ENCODE measurements at regions of chr3 and their contacts with region 1.

Region 1: GRCh38 chr3:70815817-70816216 is 503.4 kb upstream of the MDFIC2 start:
- DNase-seq: no peak
- H3K4me3 ChIP-seq: no peak overlapping the region
- H3K27ac ChIP-seq: no peak overlapping the region
- H3K4me1 ChIP-seq: peaks cover 0 to 9% (median 0%) of the 10 kb centered on the region in 4 donors
- H3K27me3 ChIP-seq: no peaks in the 10 kb centered on the region
- CTCF ChIP-seq: no peak
- EP300 ChIP-seq: no peak
- POLR2A ChIP-seq: no peak

Region 2: DNA sequence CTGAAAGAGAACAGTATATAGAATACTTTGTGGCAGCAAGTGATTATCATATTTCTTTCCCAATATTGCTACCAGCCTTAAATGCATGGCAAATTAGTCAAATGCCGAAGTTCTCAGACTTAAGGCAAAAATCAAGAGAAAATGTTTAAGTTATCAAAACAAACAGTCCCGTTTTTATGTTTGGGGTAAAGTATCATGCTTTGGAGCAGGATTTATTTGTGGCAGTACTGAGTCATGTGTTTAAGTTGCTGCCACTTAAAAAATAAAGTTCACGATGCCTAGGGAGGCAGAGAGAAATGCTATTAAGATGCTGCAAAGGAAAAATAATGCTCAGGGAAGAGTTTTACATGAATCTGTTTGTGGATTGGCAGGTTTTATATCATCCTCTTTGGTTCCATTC is 86.0 kb before region 1 on chr3:
- intact Hi-C with region 1: loop called (anchors 5 kb)
- DNase-seq: no peak
- H3K4me3 ChIP-seq: no peak overlapping the region
- H3K27ac ChIP-seq: no peak overlapping the region
- H3K4me1 ChIP-seq: peaks cover 0 to 30% (median 14%) of the 10 kb centered on the region in 4 donors
- H3K27me3 ChIP-seq: no peaks in the 10 kb centered on the region
- CTCF ChIP-seq: no peak
- EP300 ChIP-seq: no peak
- POLR2A ChIP-seq: no peak

Region 3: DNA sequence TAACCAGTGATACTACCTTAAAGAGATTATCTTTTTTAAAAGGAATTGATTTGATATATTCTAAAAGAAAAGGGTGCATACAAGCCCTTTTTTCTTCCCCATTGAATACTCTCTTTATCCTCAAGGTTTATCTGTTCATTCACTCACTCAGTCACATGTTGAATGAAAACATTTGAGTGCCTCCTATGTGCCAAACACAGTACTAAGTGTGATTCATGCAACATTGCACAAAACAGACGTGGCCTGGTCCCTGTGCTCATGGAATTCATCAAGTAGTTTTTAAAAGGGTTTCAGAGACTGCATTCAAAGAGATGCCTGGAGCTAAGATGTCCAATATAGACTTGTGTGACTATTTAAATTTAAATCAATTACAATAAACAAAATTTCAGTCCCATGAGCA is 41.2 kb before region 1 on chr3:
- intact Hi-C with region 1: no loop called
- DNase-seq: no peak
- H3K4me3 ChIP-seq: no peak overlapping the region
- H3K27ac ChIP-seq: no peak overlapping the region
- H3K4me1 ChIP-seq: no peaks in the 10 kb centered on the region
- H3K27me3 ChIP-seq: no peaks in the 10 kb centered on the region
- CTCF ChIP-seq: no peak
- EP300 ChIP-seq: no peak
- POLR2A ChIP-seq: no peak

Region 4: DNA sequence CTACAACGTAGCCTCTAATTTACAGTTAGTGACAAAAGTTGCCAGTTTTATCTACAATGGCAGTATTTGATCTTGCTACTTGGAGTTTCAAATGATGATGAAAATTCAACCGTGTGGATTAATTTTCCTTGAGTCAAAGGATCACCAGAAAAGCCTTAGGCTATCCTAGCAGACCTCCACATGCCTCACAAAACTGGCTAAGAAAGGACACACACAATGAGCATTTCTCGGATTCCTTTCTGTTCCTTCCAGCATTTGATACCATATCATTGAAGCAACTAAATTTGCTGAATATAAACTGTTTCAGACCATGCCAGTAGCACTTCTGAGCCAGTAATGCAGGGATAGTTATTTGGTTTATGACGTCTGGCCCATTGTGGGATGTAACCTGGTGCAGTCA is 84.0 kb after region 1 on chr3:
- intact Hi-C with region 1: no loop called
- DNase-seq: no peak
- H3K4me3 ChIP-seq: no peak overlapping the region
- H3K27ac ChIP-seq: no peak overlapping the region
- H3K4me1 ChIP-seq: no peaks in the 10 kb centered on the region
- H3K27me3 ChIP-seq: no peaks in the 10 kb centered on the region
- CTCF ChIP-seq: no peak
- EP300 ChIP-seq: no peak
- POLR2A ChIP-seq: no peak

Measured in esophagus muscularis mucosa (tissue), 4 donors.